Transverse colon (tissue), 4 donors: ENCODE measurements at regions of chr5 and their contacts with region 1.

Region 1: DNA sequence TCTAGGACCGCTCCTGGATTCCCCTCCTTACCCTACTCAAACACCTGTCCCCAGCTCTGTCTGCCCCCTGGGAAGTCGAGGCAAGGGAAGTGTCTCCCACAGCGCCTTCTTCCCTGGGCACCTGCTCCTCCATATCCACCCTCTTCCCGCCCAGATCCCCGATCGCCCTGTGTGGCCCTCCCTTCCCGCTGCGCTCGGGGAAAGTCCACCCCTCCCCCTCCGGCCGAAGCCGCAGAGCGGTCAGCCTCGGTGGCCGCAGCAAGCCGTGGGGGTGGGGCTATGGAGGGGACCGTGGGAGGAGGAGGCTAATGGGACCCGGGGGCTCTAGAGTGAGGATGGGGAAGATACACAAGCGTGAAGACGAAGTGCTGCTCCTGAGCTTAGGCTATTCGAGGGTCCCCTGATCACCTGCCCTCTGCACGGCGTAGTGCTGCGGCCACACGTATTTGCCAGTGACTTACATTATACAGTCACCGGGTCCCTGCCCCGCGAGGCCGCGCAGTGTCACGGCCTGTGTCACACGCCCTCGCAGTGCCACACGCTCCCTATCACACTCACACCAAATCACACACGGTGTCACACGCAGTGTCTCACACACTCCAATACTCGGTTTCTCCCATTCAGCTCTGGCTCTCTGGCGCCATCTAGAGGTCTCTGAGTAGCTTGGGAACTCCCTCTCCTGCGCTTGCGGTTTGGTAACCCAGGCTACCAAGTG is 658 bp upstream of the PCDH1 start:
- DNase-seq: peak; percentile 94
- H3K4me3 ChIP-seq: peak overlapping the region; percentile 13 to 86 (median 71)
- H3K27ac ChIP-seq: peak overlapping the region; percentile 88 to 96 (median 94)
- H3K4me1 ChIP-seq: peaks cover 6 to 54% (median 30%) of the 10 kb centered on the region in 4 donors
- H3K27me3 ChIP-seq: peaks cover 60% of the 10 kb centered on the region
- CTCF ChIP-seq: peak; percentile 95 to 99 (median 96)
- EP300 ChIP-seq: no peak
- POLR2A ChIP-seq: peak; percentile 47

Region 2: DNA sequence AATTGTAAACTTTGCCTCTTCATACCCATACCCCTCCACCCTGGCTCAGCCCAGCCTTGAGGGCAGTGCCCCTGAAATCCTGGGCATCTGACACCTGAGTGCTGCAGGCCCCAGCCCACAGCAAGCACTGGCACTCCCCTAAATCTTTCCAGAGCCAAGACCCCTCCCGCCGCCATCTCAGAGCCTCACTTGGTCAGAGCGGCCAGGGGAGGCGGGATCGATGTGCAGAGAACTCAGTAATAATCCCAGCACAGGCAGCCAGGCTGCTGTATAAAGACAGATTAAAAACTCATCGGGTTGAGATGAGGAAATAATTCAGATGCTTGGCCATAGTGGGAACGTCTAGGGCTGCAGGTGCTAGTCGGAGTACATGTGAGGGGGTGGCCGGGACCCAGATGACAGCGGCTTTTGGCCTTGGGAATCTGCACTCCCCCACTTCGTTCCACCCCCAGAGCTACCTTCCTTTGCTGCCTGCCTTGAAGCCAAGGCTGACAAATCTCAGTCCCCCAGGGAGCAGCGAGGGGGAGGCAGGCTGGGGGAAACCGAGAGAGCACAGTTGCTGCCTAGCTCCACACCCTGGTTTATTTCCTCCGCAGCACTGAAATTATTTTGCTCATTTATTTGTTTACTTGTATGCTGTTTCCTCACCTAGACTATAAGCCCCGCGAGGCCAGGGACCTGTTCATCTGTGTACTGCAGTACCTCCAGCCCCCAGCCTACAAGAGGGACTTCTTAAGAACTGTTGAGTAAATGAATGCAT is 177.3 kb before region 1 on chr5:
- in situ Hi-C with region 1: loop called (anchors 5 to 10 kb)
- intact Hi-C with region 1: loop called (anchors 2 kb)
- DNase-seq: no peak
- H3K4me3 ChIP-seq: peak overlapping the region in 1 of 4 donors; percentile 64
- H3K27ac ChIP-seq: no peak overlapping the region
- H3K4me1 ChIP-seq: peaks cover 0 to 21% (median 17%) of the 10 kb centered on the region in 4 donors
- H3K27me3 ChIP-seq: peaks cover 43% of the 10 kb centered on the region
- CTCF ChIP-seq: no peak
- EP300 ChIP-seq: no peak
- POLR2A ChIP-seq: no peak

Region 3: DNA sequence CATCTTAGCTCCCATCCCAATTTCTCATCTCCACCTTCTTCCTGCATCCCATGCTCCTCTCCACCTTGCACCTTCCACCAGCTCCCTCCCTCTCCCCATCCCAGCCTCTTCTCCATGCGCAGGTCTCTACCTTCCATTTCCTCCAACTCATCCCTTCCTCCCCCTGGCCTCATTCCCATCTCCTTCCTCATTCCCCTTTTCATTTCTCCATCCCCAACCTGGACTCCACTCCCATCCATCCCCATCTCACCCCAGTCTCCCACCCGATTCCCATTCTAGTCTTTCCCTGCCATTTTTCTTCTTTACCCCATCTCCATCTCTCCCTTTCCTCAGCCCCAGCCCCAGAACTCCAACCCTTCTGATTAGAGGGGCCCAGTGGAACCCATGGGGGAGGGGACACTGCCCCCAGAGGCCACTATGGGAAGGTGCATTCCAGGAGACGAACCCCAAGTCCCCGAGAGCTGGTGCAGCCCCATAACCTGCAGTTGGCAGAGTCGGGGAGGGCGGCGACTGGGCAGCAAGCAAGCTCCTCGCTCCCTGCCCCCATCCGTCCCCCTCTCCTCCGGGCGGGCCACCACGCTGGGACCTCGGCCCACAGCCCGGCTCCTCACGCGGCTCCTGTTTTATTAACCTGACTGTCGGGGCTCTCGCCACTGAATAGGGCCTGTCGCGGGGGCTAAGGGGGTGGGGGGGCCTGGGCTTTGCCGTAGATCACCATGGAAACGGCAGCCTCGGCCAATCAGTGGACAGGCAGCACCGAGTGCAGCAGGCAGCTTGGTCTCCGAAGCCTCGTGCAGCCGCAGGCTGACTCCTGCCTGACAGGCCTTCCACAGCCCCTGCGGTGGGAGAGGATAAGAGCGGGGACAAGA is 67.3 kb before region 1 on chr5:
- in situ Hi-C with region 1: no loop called
- intact Hi-C with region 1: loop called (anchors 5 kb)
- DNase-seq: no peak
- H3K4me3 ChIP-seq: no peak overlapping the region
- H3K27ac ChIP-seq: no peak overlapping the region
- H3K4me1 ChIP-seq: peaks cover 0 to 5% (median 0%) of the 10 kb centered on the region in 4 donors
- H3K27me3 ChIP-seq: peaks cover 24% of the 10 kb centered on the region
- CTCF ChIP-seq: peak; percentile 38 to 59 (median 53)
- EP300 ChIP-seq: no peak
- POLR2A ChIP-seq: no peak

Region 4: GRCh38 chr5:141849375-141850243 is 29.3 kb before region 1 on chr5:
- in situ Hi-C with region 1: no loop called
- intact Hi-C with region 1: no loop called
- DNase-seq: peak; percentile 95
- H3K4me3 ChIP-seq: peak overlapping the region; percentile 47 to 77 (median 57)
- H3K27ac ChIP-seq: peak overlapping the region; percentile 94 to 98 (median 96)
- H3K4me1 ChIP-seq: peaks cover 13 to 45% (median 38%) of the 10 kb centered on the region in 4 donors
- H3K27me3 ChIP-seq: no peaks in the 10 kb centered on the region
- CTCF ChIP-seq: peak in 3 of 5 experiments; percentile 11 to 45 (median 33)
- EP300 ChIP-seq: peak; percentile 84
- POLR2A ChIP-seq: peak; percentile 87

Region 5: GRCh38 chr5:141951332-141951781 is 72.5 kb after region 1 on chr5:
- in situ Hi-C with region 1: loop called in 2 of 4 experiments (anchors 5 to 10 kb)
- intact Hi-C with region 1: no loop called
- DNase-seq: no peak
- H3K4me3 ChIP-seq: no peak overlapping the region
- H3K27ac ChIP-seq: peak overlapping the region in 1 of 4 donors; percentile 32
- H3K4me1 ChIP-seq: no peaks in the 10 kb centered on the region
- H3K27me3 ChIP-seq: no peaks in the 10 kb centered on the region
- CTCF ChIP-seq: no peak
- EP300 ChIP-seq: no peak
- POLR2A ChIP-seq: no peak

Region 6: GRCh38 chr5:141958113-141958512 is 79.2 kb after region 1 on chr5 and contains the start of gene PCDH12:
- in situ Hi-C with region 1: loop called in 2 of 4 experiments (anchors 5 to 10 kb)
- intact Hi-C with region 1: no loop called
- DNase-seq: peak; percentile 13
- H3K4me3 ChIP-seq: no peak within 1 kb of the TSS
- H3K27ac ChIP-seq: peak within 1 kb of the TSS in 2 of 4 donors; percentile 40 to 50
- H3K4me1 ChIP-seq: peaks cover 0 to 18% (median 3%) of the 10 kb centered on the region in 4 donors
- H3K27me3 ChIP-seq: no peaks in the 10 kb centered on the region
- CTCF ChIP-seq: no peak
- EP300 ChIP-seq: no peak
- POLR2A ChIP-seq: no peak
- total RNA-seq, gene PCDH12: 0.37 to 0.95 (median 0.68) TPM in 3 of 4 donors, not detected in the other

Region 7: GRCh38 chr5:142108432-142109330 is 229.8 kb after region 1 on chr5 and contains the start of gene NDFIP1:
- in situ Hi-C with region 1: no loop called
- intact Hi-C with region 1: no loop called
- DNase-seq: peak; percentile 90
- H3K4me3 ChIP-seq: peak within 1 kb of the TSS; percentile 74 to 90 (median 82)
- H3K27ac ChIP-seq: peak within 1 kb of the TSS; percentile 96 to 99 (median 98)
- H3K4me1 ChIP-seq: peaks cover 7 to 29% (median 17%) of the 10 kb centered on the region in 4 donors
- H3K27me3 ChIP-seq: no peaks in the 10 kb centered on the region
- CTCF ChIP-seq: no peak
- EP300 ChIP-seq: no peak
- POLR2A ChIP-seq: peak; percentile 85
- total RNA-seq, gene NDFIP1: 19.1 to 92.2 (median 65.6) TPM